ENCODE measurements at regions of chr4 and their contacts with region 1.

Region 1: DNA sequence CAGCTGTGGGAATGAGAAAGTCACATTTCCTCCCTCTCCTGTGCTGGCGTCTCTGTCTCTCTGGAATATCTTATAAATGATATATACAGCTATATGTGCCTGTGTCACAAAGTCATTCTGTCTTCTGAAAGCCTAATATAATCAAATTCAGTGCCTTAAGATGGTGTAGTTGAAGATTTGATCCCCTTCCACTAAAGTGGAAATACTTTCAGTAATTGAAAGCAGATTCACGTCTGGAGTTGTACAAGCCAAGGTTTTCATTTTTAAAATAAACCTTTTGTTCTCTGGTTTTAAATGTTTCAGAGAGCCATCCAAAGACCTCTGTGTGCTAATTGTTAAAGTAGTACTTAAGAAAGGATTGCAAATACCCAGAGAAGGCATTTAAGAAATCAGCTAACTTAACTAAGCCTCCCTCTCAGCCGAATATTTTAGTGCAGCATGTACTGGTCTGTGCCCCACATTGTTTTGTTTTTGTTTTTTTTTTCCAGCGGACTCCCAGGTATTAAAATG is 206.8 kb downstream of the TENM3 start:
- DNase-seq: no peak
- ATAC-seq: no peak
- H3K4me3 ChIP-seq: peak overlapping the region; percentile 70
- H3K27ac ChIP-seq: no peak overlapping the region
- H3K4me1 ChIP-seq: 0 out of 2 replicates have a peak, but pooled peaks cover 5% of the 10 kb centered on the region
- H3K27me3 ChIP-seq: peaks cover 34% of the 10 kb centered on the region
- CTCF ChIP-seq: no peak

Region 2: DNA sequence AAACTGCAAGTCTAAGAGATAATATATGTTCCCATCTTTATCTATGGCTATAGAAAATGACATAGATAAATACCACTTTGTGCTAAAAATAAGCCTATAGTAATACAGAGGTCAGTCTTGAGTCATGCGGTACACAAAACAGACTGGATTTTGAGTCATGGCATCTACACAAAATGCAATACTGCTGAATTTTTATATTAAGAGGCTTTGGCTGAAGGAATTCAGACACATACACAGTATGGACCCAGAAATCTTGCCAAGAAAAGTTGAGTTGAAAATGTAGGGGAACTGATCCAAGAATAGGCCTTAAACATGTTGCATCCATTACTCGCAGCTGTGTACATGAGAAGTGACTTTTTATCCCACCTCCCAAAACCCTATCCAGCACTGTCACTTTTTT is 22.4 kb before region 1 on chr4:
- CTCF ChIA-PET with region 1: no interaction called
- POLR2A ChIA-PET with region 1: no interaction called
- intact Hi-C with region 1: no loop called
- DNase-seq: no peak
- ATAC-seq: no peak
- H3K4me3 ChIP-seq: no peak overlapping the region
- H3K27ac ChIP-seq: no peak overlapping the region
- H3K4me1 ChIP-seq: no peaks in the 10 kb centered on the region
- H3K27me3 ChIP-seq: no peaks in the 10 kb centered on the region
- CTCF ChIP-seq: no peak

Region 3: GRCh38 chr4:182578402-182578801 is 128.4 kb after region 1 on chr4:
- CTCF ChIA-PET with region 1: no interaction called
- POLR2A ChIA-PET with region 1: no interaction called
- intact Hi-C with region 1: no loop called
- DNase-seq: peak; percentile 61
- ATAC-seq: peak; percentile 94
- H3K4me3 ChIP-seq: no peak overlapping the region
- H3K27ac ChIP-seq: no peak overlapping the region
- H3K4me1 ChIP-seq: peaks cover 4% of the 10 kb centered on the region; the same call in 1 of the 2 replicates
- H3K27me3 ChIP-seq: no peaks in the 10 kb centered on the region
- CTCF ChIP-seq: no peak

Region 4: GRCh38 chr4:182752158-182752910 is 302.3 kb after region 1 on chr4:
- CTCF ChIA-PET with region 1: no interaction called
- POLR2A ChIA-PET with region 1: no interaction called
- intact Hi-C with region 1: loop called (anchors 2 kb)
- DNase-seq: peak; percentile 78
- ATAC-seq: peak; percentile 68
- H3K4me3 ChIP-seq: no peak overlapping the region
- H3K27ac ChIP-seq: peak overlapping the region; percentile 77
- H3K4me1 ChIP-seq: peaks cover 63% of the 10 kb centered on the region
- H3K27me3 ChIP-seq: no peaks in the 10 kb centered on the region
- CTCF ChIP-seq: no peak

Region 5: DNA sequence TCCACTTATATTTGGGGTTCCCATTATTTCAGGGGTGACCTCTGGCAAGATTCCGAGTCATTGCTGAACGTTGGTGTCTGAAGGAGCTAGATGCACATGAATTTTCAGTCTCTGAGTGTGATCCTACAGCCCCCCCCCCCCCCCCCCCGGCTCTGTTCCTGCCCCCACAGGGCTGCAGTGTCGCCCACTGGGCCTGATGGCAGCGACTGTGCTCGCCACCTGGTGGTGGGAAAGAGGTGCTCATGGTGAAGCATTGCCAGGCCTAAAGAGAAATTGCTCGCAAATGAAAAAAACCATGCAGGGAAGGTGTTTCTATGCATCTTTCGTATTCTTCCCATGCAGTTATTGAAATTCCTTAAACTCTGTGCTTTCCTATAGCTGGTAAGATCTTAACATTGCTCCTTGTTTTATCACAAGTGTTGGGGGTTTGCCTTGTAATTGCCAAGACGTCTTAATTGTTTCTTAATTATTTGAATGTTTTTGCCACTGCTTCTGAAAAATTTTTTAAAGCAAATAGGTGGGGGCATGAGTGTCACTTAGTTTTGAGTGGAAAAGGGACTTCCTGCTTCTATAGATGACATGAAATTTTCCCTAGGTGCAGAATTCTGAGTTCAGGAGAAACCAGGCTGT is 806.9 kb after region 1 on chr4:
- CTCF ChIA-PET with region 1: no interaction called
- POLR2A ChIA-PET with region 1: no interaction called
- intact Hi-C with region 1: loop called (anchors 10 kb)
- DNase-seq: peak; percentile 48
- ATAC-seq: no peak
- H3K4me3 ChIP-seq: no peak overlapping the region
- H3K27ac ChIP-seq: no peak overlapping the region
- H3K4me1 ChIP-seq: peaks cover 48% of the 10 kb centered on the region
- H3K27me3 ChIP-seq: no peaks in the 10 kb centered on the region
- CTCF ChIP-seq: peak; percentile 80

Measured in PC-3 (cell line).